ENCODE measurements at regions of chr10 and their contacts with region 1.

Region 1: GRCh38 chr10:64041185-64041988 is 520.2 kb downstream of the REEP3 start:
- DNase-seq: peak; percentile 86
- ATAC-seq: peak; percentile 98
- H3K4me3 Mint-ChIP-seq: peak overlapping the region; percentile 52
- H3K27ac Mint-ChIP-seq: no peak overlapping the region
- H3K4me1 Mint-ChIP-seq: peaks cover 4% of the 10 kb centered on the region
- H3K27me3 Mint-ChIP-seq: peaks cover 4% of the 10 kb centered on the region
- CTCF ChIP-seq: peak; percentile 98

Region 2: DNA sequence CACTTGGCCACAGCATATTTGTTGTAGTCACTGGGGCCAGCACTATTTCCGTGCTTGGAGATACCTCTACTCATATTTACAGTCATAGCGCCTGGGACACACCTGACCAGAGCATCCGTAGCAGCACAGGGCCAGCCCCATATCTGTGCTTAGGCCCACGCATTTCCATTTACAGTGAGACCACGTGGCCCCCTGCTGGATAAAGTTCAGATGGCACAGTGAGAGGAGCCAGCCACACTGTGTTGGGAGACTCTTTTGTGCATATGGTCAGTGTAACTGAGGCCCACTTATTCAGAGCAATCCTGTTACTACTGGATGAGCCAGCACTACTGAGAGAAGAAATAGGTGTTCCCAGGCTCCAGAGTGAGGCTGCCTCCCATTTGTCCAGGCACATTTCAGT is 64.8 kb before region 1 on chr10:
- CTCF ChIA-PET with region 1: interaction called, 12 read pairs
- POLR2A ChIA-PET with region 1: no interaction called
- intact Hi-C with region 1: no loop called
- DNase-seq: peak; percentile 69
- ATAC-seq: peak; percentile 90
- H3K4me3 Mint-ChIP-seq: no peak overlapping the region
- H3K27ac Mint-ChIP-seq: no peak overlapping the region
- H3K4me1 Mint-ChIP-seq: no peaks in the 10 kb centered on the region
- H3K27me3 Mint-ChIP-seq: no peaks in the 10 kb centered on the region
- CTCF ChIP-seq: peak; percentile 42

Region 3: DNA sequence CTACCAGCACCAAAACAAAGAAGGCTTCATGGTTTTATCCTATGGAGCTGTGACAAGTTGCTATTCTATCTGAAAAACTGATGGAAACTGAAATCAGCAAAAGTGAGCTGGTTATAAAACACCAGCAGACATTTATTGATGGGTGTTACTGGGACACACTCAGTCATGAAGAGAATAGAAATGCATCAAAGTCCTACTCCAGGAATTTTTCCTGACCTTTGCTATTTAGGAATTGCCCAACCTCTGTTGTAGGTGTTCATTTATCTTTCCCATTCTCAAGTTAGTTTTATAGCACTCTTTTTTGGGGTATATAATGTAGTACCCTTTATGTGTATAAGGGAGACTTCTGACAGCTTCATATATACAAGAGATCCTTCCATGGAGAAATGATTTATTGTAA is 13.0 kb after region 1 on chr10:
- CTCF ChIA-PET with region 1: interaction called, 35 read pairs
- POLR2A ChIA-PET with region 1: no interaction called
- intact Hi-C with region 1: no loop called
- DNase-seq: no peak
- ATAC-seq: no peak
- H3K4me3 Mint-ChIP-seq: no peak overlapping the region
- H3K27ac Mint-ChIP-seq: no peak overlapping the region
- H3K4me1 Mint-ChIP-seq: no peaks in the 10 kb centered on the region
- H3K27me3 Mint-ChIP-seq: no peaks in the 10 kb centered on the region
- CTCF ChIP-seq: no peak

Region 4: DNA sequence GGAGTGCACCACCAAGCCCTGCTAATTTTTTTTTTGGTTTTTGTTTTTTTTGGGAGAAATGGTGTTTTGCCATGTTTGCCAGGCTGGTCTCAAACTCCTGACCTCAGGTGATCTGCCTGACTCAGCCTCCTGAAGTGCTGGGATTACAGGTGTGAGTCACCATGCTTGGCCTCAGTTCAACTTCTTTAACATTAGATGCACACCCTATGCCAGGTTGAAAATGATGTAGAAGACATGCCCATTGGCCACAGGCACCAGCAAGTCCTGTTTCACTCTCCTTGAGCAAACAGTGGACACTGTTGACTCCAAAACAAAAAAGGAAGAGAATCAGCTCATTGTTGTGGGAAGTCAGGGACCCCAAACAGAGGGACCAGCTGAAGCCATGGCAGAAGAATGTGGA is 685.1 kb after region 1 on chr10:
- CTCF ChIA-PET with region 1: no interaction called
- POLR2A ChIA-PET with region 1: no interaction called
- intact Hi-C with region 1: no loop called
- DNase-seq: no peak
- ATAC-seq: no peak
- H3K4me3 Mint-ChIP-seq: no peak overlapping the region
- H3K27ac Mint-ChIP-seq: no peak overlapping the region
- H3K4me1 Mint-ChIP-seq: no peaks in the 10 kb centered on the region
- H3K27me3 Mint-ChIP-seq: no peaks in the 10 kb centered on the region
- CTCF ChIP-seq: no peak

Measured in activated CD8-positive, alpha-beta T cell treated with anti-CD3 and anti-CD28 coated beads for 36 hours (primary cell).